A673 (cell line): ENCODE measurements at regions of chr9 and their contacts with region 1.

Region 1: DNA sequence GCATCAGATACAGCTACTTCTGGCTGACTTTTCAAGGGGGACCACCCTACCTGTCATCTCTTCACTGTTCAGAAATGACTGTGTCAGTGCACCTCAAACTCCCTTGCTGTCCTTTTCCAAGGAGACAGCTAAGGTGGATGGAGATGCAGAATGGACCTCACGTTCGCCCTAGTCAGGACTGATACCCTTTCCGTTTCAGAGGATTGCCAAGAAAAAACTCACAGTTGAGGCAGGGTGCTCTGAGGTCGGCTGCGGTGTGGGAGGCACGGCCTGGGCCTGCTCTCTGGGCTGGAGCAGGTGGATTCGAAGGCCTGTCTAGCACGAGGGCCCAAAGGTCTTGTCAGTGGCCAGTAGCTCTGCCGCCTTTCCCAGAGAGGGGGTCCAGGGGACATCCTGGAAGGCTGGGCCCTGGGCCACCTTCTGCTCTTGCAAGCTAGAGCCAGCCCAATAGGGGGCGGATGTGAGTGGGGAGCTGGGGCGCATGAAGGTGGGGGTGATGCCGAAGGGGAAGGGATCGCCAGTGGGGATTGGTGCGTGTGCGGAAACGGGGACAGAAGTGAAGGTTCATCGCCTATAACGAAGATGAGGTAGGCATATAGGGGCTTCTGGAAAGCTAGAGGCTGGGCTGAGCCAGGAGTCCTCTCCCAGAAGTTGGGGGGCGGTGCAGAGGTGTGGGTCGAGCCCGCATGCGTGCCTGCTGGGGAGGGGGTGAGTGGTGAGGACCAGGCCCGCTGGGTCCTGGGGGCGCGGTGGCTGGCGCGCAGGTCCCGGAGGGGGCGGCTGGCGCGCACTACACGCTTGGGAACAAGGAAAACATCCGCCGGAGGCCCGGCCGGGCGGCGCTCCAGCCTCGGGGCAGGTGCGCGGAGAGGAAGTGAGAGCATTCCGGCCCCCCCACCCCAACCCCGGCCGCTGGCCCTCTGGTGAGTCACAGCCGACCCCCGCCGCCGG is 2.5 kb upstream of the MSMP start:
- DNase-seq: peak; percentile 80
- H3K4me3 ChIP-seq: peak overlapping the region; percentile 87
- H3K27ac ChIP-seq: peak overlapping the region; percentile 91
- H3K4me1 ChIP-seq: peaks cover 13% of the 10 kb centered on the region
- H3K27me3 ChIP-seq: no peaks in the 10 kb centered on the region
- CTCF ChIP-seq: peak; percentile 82

Region 2: DNA sequence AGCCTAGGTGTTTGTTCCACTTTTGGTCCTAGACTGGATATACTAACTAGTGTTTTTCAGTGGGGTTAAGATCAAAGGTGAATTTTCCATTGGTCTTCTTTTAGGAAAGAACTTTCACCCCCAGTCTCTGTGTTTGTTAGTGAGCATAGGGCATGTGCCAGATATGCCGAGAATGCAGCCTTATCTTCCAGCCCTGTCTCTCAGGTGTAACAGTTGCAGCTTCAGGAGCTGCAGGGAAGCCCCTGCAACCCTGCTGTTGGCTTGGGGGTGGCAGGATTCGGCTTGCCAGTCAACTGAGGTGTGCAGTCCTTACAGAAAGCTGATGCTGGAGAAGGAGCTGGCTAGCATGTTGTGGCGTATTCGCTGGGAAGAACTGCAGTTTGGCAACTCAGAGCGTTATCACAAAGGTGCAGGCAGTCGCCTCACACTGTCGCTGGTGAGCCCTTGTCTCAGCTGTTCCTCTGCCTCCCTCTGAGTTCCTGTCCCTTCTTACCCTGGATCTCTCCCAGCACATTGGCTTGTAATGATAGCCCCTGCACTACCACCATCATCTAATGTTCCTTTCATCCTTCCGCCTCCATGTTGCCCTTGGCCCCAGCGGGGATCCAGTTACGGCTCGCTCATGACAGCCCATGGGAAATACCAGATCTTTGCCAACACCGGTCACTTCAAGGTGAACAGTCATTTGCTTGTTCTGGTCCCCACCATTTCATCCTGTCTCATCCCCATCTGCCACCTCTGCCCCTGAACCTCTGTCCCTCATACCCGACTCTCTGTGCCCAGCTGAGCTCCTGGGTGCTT is 45.0 kb after region 1 on chr9:
- CTCF ChIA-PET with region 1: no interaction called
- POLR2A ChIA-PET with region 1: interaction called, 16 read pairs
- intact Hi-C with region 1: no loop called
- DNase-seq: no peak
- H3K4me3 ChIP-seq: no peak overlapping the region
- H3K27ac ChIP-seq: no peak overlapping the region
- H3K4me1 ChIP-seq: no peaks in the 10 kb centered on the region
- H3K27me3 ChIP-seq: no peaks in the 10 kb centered on the region
- CTCF ChIP-seq: no peak

Region 3: DNA sequence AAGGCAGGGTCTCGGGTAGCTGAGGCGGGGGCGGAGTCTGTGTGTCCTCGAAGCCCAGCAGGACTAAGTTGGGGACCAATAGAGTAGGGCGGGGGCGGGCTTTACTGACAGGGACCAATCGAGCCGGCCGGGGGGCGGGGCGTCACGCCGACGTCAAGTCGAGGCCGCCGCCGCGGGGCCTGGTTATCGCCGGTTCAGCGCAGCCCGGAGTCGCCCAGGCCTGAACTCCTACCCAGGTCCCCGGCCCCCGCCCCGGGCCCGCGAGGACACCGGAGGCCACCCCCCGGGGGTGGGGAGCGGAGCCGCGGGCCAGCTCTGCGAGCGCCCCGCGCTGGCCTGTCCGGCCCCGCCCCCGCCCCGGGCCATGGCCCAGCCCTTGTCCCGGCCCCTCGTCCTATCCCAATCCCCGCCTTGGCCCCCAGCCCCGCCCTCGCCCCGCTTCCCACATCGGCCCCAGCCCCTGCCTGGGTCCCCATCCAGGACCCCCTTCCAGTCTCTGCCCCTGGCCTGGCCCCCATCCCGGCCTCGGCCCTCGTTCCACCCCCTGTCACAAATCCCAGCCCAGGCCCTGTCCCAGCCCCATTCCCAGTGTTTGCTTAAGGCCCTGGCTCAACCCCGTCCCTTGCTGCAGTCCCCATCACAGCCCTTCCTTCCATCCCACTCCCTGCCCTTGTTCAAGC is 72.7 kb after region 1 on chr9 and contains the start of gene TMEM8B:
- CTCF ChIA-PET with region 1: interaction called, 3 read pairs
- POLR2A ChIA-PET with region 1: interaction called, 10 read pairs
- intact Hi-C with region 1: no loop called
- DNase-seq: peak; percentile 96
- H3K4me3 ChIP-seq: peak within 1 kb of the TSS; percentile 61
- H3K27ac ChIP-seq: peak within 1 kb of the TSS; percentile 63
- H3K4me1 ChIP-seq: peaks cover 9% of the 10 kb centered on the region
- H3K27me3 ChIP-seq: no peaks in the 10 kb centered on the region
- CTCF ChIP-seq: no peak
- total RNA-seq, gene TMEM8B: 6.9 and 10.9 TPM in 2 replicates

Region 4: DNA sequence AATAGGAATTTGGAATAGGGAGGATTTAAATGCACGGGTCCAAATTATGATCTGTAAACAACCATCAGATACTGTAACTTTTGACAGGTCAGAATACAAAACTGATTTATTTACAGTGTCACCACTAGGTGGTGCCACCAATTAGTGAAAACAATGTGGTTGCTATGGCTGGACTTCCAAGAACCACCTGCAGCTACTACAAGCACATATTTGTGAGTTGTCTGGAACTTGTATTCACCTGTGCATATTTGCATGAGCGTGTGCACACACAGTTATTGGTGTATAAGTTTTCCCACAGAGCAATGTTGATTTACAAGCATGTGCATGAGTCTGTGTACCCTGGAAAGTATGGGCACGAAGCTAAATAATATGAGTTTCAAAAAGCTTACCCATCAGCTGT is 146.5 kb after region 1 on chr9:
- CTCF ChIA-PET with region 1: no interaction called
- POLR2A ChIA-PET with region 1: no interaction called
- intact Hi-C with region 1: no loop called
- DNase-seq: peak; percentile 65
- H3K4me3 ChIP-seq: no peak overlapping the region
- H3K27ac ChIP-seq: no peak overlapping the region
- H3K4me1 ChIP-seq: peaks cover 27% of the 10 kb centered on the region
- H3K27me3 ChIP-seq: no peaks in the 10 kb centered on the region
- CTCF ChIP-seq: peak; percentile 77